ENCODE measurements at regions of chr18 and their contacts with region 1.

Region 1: DNA sequence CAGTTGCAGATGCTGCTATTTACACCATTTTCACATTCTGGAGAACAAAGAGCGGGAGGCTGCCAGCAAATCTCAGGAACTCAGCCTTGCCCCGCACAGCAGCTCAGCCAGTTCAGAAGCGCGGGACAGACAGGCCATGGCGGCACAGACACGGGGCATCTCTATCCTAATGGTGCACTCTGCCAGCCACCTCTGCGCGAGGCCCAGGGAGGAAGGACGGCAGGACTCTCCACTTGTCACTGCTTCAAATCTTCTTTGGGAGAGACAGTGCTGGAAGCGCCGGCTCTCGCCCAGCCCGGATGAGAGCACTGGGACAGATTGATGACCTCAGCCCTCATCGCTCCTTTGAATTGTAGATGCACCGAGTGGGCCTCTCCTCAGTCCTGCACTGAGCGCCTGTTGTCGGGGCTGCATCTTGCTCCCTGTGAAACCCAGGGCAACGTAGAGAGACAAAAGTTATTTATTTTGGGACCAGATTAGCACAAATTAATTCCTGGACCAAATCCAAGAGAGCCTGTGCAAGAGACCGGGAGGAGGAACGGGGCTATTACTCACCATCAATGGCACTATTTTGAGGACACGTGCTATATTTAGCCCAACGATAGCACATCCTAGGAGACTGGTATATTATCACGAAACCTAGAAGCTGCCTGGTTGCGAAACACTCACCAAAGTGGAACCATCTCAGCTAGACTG is 211.4 kb upstream of the SMIM21 start:
- DNase-seq: peak; percentile 4 to 69 (median 57)
- H3K4me3 ChIP-seq: peak overlapping the region; percentile 9 to 71 (median 48)
- H3K27ac ChIP-seq: peak overlapping the region in 58 of 59 donors; percentile 34 to 91 (median 80)
- H3K27me3 ChIP-seq: no peaks in the 10 kb centered on the region
- CTCF ChIP-seq: no peak

Region 2: GRCh38 chr18:75376004-75376403 is 262.9 kb before region 1 on chr18:
- intact Hi-C with region 1: no loop called
- DNase-seq: no peak
- H3K4me3 ChIP-seq: no peak overlapping the region
- H3K27ac ChIP-seq: no peak overlapping the region
- H3K27me3 ChIP-seq: no peaks in the 10 kb centered on the region
- CTCF ChIP-seq: no peak

Region 3: DNA sequence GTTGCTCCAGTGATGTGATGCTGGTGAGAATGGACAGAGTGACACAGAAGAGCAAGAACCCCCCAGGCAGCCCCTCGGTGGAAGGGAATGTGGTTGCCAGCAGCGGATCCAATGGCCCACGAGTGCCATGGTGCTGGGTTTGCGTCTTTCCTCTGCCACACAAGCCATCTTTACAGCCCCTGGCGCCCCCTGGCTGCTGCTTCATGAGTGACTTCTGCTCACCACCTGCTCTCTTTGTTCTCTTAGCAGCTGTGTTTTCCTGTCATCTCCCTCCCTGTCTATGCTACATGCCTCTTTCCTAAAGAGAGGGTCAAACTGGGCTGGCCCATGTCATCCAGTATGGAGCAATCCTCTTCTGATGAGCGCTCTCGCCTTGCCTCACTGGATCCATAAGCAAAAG is 88.5 kb after region 1 on chr18:
- intact Hi-C with region 1: loop called in 1 of 2 experiments (anchors 5 kb)
- DNase-seq: peak in 8 of 10 donors; percentile 16 to 65 (median 56)
- H3K4me3 ChIP-seq: no peak overlapping the region
- H3K27ac ChIP-seq: no peak overlapping the region
- H3K27me3 ChIP-seq: peaks cover 0 to 18% (median 0%) of the 10 kb centered on the region in 45 donors
- CTCF ChIP-seq: peak in 54 of 56 donors; percentile 33 to 73 (median 56)